Activated B cell treated with CpG ODN at 0.5 μM for 24 hours (primary cell): ENCODE measurements at regions of chr10 and their contacts with region 1.

Region 1: GRCh38 chr10:110137142-110137545 is 70.3 kb upstream of the MXI1 start:
- DNase-seq: no peak
- ATAC-seq: peak; percentile 66
- H3K4me3 Mint-ChIP-seq: no peak overlapping the region
- H3K27ac Mint-ChIP-seq: peak overlapping the region; percentile 68
- H3K4me1 Mint-ChIP-seq: peaks cover 35% of the 10 kb centered on the region
- H3K27me3 Mint-ChIP-seq: no peaks in the 10 kb centered on the region
- CTCF ChIP-seq: no peak

Region 2: DNA sequence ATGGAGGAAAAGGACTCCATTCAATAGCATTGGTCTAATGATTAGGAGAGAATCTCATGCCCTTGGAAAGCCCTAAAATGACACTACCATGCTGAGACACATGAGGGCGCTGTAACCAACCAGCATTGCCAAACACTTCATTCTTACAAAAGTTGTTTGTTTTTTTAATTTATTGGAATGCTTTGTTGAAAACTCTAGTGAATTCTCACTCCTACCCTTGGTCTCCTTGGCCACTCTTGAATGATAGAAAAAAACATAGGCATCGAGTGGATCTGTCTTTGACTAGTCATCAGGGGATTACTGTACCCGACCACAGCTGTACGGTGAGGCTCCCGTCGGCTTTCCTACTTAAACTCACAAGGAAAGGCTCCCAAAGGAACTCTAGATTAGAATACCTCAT is 158.7 kb before region 1 on chr10:
- CTCF ChIA-PET with region 1: interaction called, 10 read pairs
- POLR2A ChIA-PET with region 1: no interaction called
- intact Hi-C with region 1: no loop called
- DNase-seq: no peak
- ATAC-seq: peak; percentile 42
- H3K4me3 Mint-ChIP-seq: no peak overlapping the region
- H3K27ac Mint-ChIP-seq: no peak overlapping the region
- H3K4me1 Mint-ChIP-seq: no peaks in the 10 kb centered on the region
- H3K27me3 Mint-ChIP-seq: no peaks in the 10 kb centered on the region
- CTCF ChIP-seq: peak; percentile 19

Region 3: DNA sequence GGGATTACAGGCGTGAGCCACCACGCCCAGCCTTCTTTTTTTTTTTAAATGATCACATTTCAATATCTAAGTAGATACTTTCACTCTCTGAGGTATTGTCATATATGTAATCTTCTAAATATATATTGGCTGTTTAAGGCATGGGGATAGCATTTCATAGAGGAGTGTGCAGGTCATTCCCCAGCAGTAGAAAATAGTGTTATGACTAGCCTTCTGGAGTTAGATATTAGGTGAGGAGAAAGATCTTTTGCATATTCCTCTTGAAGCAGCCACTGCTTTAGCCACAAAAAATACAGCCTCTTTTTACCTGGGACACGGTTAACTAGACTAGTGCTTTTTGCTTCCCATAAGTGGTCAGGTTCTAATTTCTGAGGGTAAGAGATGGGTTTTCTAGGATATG is 100.5 kb before region 1 on chr10:
- CTCF ChIA-PET with region 1: no interaction called
- POLR2A ChIA-PET with region 1: no interaction called
- intact Hi-C with region 1: no loop called
- DNase-seq: no peak
- ATAC-seq: peak; percentile 25
- H3K4me3 Mint-ChIP-seq: peak overlapping the region; percentile 57
- H3K27ac Mint-ChIP-seq: peak overlapping the region; percentile 11
- H3K4me1 Mint-ChIP-seq: peaks cover 73% of the 10 kb centered on the region
- H3K27me3 Mint-ChIP-seq: no peaks in the 10 kb centered on the region
- CTCF ChIP-seq: no peak

Region 4: GRCh38 chr10:110225756-110226542 is 88.8 kb after region 1 on chr10:
- CTCF ChIA-PET with region 1: interaction called, 10 read pairs
- POLR2A ChIA-PET with region 1: interaction called, 12 read pairs
- intact Hi-C with region 1: loop called (anchors 1 kb)
- DNase-seq: peak; percentile 83
- ATAC-seq: peak; percentile 51
- H3K4me3 Mint-ChIP-seq: peak overlapping the region; percentile 97
- H3K27ac Mint-ChIP-seq: peak overlapping the region; percentile 96
- H3K4me1 Mint-ChIP-seq: peaks cover 28% of the 10 kb centered on the region
- H3K27me3 Mint-ChIP-seq: no peaks in the 10 kb centered on the region
- CTCF ChIP-seq: no peak

Region 5: DNA sequence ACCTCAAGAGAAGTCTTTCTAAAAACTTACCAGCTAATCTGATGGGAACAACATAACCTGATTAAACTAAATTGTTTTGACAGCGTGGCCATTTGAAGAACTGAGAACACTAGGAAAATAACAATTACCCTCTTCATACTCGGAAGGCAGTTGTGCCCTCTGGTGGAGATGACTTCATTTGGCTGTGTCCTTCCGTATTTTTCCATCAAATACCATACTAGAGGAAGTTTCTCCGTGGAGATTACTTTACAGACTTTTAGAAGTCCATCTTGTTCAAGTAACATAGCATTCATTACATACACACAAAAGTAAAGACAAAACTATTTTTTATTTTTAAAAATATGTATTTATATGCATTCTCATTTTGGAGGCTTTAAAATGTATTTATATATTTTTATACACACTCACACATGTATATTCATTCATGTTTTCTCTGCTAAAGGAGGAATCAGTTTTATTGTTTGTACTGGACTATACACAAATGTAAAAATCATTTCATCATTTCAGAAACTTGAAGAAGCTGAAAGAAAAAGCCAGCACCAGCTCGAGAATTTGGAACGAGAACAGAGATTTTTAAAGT is 142.4 kb after region 1 on chr10:
- CTCF ChIA-PET with region 1: interaction called, 73 read pairs
- POLR2A ChIA-PET with region 1: interaction called, 7 read pairs
- intact Hi-C with region 1: loop called (anchors 1 kb)
- DNase-seq: no peak
- ATAC-seq: peak; percentile 68
- H3K4me3 Mint-ChIP-seq: peak overlapping the region; percentile 38
- H3K27ac Mint-ChIP-seq: no peak overlapping the region
- H3K4me1 Mint-ChIP-seq: peaks cover 24% of the 10 kb centered on the region
- H3K27me3 Mint-ChIP-seq: no peaks in the 10 kb centered on the region
- CTCF ChIP-seq: peak; percentile 92

Region 6: GRCh38 chr10:110567201-110568054 is 430.3 kb after region 1 on chr10 and contains the start of gene SMC3:
- CTCF ChIA-PET with region 1: no interaction called
- POLR2A ChIA-PET with region 1: no interaction called
- intact Hi-C with region 1: loop called (anchors 5 kb)
- DNase-seq: peak; percentile 89
- ATAC-seq: peak; percentile 88
- H3K4me3 Mint-ChIP-seq: peak within 1 kb of the TSS; percentile 91
- H3K27ac Mint-ChIP-seq: peak within 1 kb of the TSS; percentile 98
- H3K4me1 Mint-ChIP-seq: peaks cover 41% of the 10 kb centered on the region
- H3K27me3 Mint-ChIP-seq: no peaks in the 10 kb centered on the region
- CTCF ChIP-seq: no peak
- total RNA-seq, gene SMC3: 41.1 and 43.3 TPM in 2 replicates